GM13977 (cell line): ENCODE measurements at regions of chr3 and their contacts with region 1.

Region 1: DNA sequence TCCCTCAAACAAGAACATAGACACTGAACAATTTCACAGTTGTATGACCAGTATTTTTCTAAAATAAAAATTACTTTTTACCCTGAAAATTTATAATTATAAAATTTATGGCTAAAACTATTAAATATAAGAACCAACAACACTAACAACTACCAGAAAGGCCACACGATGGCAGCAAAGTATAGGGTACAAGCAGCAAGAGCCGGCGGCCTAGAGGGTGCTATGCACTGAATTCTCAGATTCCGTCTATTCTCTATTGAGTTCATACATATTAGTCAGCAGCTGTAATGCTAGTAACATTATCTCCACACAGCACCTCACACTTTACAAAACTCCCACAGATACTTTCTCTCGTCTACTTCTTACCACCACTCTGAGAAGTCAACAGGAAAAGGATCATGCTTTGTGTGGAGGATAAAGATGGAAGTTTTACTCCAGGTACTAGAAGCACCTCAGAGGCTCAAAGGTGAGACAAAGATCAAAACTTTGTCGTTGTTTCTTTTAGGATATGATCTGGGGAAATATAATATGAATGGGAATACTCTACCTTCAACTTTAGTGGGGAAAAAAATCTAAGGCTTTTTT is 160.5 kb downstream of the FGF12 start:
- DNase-seq: peak; percentile 66
- CTCF ChIP-seq: peak; percentile 60

Region 2: DNA sequence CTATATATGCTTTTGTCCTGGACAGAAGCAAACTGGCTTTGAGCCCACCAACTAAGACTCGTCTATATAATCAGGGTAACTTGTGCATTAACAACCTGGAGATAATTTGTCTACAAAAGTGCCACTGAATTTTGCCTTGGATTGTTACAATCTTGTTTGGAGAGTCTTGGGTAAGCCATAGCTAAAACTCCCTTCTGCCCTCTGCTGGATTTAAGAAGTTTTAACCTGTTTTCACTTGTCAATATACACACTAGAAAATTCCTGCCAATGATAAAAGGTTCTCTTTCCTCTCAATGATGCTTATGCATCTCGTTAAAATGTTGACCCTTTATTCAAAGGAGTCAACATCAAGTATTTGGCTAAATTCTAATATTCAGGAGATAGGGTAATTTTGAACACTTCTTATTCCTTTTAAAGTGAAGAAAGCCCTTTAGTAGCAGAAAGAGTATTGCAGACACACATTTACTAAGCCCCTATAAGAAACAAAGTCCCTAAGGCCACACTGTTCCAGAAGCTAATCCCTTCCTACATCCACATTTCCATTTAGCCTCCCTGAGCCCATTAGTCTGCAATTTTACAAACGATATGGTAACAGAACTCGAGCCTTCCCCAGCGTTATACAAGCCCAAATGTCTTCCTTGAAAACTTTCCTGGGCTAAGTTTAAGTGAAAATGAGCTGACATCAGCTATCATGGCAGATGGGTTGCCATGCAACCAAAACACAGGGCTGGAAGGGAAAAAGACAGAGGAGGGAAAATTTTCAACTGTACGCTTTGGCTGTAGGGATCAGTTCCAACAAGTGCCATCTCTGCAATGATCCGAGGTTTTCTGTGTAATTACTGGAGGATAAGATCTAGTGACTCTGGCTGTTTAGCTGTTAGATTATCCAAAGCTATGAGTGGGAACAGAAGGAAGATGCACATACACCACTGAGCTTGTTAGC is 236.4 kb after region 1 on chr3:
- in situ Hi-C with region 1: loop called (anchors 25 kb)
- DNase-seq: peak; percentile 42
- CTCF ChIP-seq: peak; percentile 44

Region 3: GRCh38 chr3:193040836-193041672 is 474.3 kb after region 1 on chr3:
- in situ Hi-C with region 1: loop called (anchors 25 kb)
- DNase-seq: peak; percentile 62
- CTCF ChIP-seq: peak; percentile 54